CD8-positive, alpha-beta T cell (primary cell): ENCODE measurements at regions of chr10 and their contacts with region 1.

Region 1: DNA sequence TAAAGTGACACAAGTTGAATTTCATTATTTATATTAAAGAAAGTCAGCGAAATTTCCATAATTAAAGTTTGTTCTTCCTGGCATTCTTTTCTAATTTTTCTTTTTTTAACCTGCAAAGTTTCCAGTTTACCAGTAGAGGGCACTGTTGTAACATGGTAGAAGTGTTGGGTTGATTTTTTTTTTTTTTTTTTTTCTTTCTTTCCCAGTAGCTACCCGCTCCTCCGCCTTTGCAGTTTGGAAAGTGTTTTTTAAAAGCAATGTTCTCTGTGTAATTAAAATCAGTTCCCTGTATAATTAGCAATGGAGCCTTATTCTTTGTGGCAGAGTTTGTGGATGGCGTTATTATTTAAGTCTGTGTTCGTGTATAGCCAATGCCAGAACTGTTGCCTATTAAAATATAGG is 53.7 kb downstream of the TAF3 start:
- DNase-seq: peak in 2 of 9 experiments; percentile 40 to 54
- ATAC-seq: no peak
- H3K4me3 ChIP-seq: no peak overlapping the region
- H3K4me3 Mint-ChIP-seq: peak overlapping the region; percentile 56
- H3K27ac ChIP-seq: no peak overlapping the region
- H3K27ac Mint-ChIP-seq: no peak overlapping the region
- H3K4me1 ChIP-seq: no peaks in the 10 kb centered on the region
- H3K4me1 Mint-ChIP-seq: peaks cover 26% of the 10 kb centered on the region
- H3K27me3 ChIP-seq: no peaks in the 10 kb centered on the region
- H3K27me3 Mint-ChIP-seq: no peaks in the 10 kb centered on the region
- CTCF ChIP-seq: peak; percentile 98

Region 2: DNA sequence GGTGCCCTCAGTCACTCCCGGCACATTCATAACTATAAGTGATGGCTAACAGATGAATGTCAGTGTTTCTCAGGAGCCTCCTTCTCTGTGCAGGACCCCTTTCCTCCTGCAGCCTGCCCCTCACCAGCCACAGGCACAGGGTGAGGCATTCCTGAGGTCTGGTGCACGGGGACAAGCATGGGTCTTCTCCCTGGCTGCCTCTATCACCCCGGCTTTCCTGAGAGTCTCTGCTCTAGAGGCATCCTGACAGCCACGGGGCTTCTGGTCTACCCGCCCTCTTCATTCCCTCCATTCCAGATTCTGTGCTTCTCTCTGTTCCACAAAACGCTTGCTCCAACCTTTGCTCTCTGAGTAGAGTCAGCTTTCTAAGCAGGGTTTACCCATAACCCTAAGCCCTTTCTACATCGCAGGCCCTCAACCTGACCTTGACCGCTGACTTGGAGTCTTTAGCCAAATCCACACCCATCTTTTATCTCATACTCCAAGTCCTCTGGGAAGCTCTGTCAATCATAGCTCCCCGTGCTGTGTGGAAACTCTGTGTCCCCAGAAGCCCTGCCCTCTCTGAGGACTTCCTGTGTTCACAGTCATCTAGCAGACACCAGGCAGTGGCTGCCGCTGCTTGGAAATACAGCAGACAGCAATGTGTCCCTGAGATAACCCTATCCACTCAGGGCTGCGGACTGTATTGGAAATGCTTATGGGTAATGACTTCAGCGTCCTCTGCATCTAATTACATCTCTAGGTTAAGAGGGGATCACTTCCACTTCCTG is 620.2 kb before region 1 on chr10:
- CTCF ChIA-PET with region 1: no interaction called
- POLR2A ChIA-PET with region 1: no interaction called
- intact Hi-C with region 1: no loop called
- DNase-seq: peak in 1 of 9 experiments; percentile 21
- ATAC-seq: no peak
- H3K4me3 ChIP-seq: no peak overlapping the region
- H3K4me3 Mint-ChIP-seq: no peak overlapping the region
- H3K27ac ChIP-seq: no peak overlapping the region
- H3K27ac Mint-ChIP-seq: peak overlapping the region; percentile 16
- H3K4me1 ChIP-seq: peaks cover 11% of the 10 kb centered on the region
- H3K4me1 Mint-ChIP-seq: peaks cover 39% of the 10 kb centered on the region
- H3K27me3 ChIP-seq: no peaks in the 10 kb centered on the region
- H3K27me3 Mint-ChIP-seq: no peaks in the 10 kb centered on the region
- CTCF ChIP-seq: no peak

Region 3: DNA sequence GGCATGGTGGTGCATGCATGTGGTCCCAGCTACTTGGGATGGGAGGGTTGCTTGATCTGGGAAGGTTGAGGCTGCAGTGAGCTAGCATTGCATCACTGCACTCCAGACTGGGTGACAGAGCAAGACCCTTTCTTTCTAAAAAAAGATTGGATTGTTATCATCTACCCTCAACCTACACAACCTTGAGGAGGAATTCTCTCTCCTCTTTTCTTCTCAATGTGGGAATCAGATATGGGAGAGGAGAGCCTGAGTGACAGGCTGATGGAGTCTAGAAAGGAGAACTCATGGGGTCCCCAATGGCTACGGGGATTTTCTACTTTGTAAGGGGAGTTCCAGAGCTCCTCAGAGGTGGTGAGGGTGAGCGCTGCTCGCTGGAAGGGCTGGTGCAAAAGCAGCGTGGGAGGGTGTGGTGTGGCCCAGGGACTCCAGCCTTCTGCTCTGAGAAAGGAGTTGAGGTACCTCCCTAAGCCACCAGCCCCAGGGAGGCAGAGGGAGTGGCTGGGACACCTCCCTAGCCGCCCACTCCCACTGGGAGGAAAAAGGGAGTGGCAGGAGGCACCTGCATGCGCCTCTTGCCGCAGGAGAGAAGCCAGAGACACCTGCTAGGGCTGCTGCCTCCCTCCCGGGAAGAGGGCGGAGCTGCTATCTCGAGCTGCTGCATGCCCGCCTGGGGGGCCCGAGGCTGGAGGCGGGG is 230.8 kb after region 1 on chr10:
- CTCF ChIA-PET with region 1: no interaction called
- POLR2A ChIA-PET with region 1: no interaction called
- intact Hi-C with region 1: no loop called
- DNase-seq: peak in 3 of 9 experiments; percentile 20 to 43 (median 23)
- ATAC-seq: no peak
- H3K4me3 ChIP-seq: no peak overlapping the region
- H3K4me3 Mint-ChIP-seq: no peak overlapping the region
- H3K27ac ChIP-seq: no peak overlapping the region
- H3K27ac Mint-ChIP-seq: no peak overlapping the region
- H3K4me1 ChIP-seq: no peaks in the 10 kb centered on the region
- H3K4me1 Mint-ChIP-seq: peaks cover 3% of the 10 kb centered on the region
- H3K27me3 ChIP-seq: no peaks in the 10 kb centered on the region
- H3K27me3 Mint-ChIP-seq: no peaks in the 10 kb centered on the region
- CTCF ChIP-seq: no peak

Region 4: DNA sequence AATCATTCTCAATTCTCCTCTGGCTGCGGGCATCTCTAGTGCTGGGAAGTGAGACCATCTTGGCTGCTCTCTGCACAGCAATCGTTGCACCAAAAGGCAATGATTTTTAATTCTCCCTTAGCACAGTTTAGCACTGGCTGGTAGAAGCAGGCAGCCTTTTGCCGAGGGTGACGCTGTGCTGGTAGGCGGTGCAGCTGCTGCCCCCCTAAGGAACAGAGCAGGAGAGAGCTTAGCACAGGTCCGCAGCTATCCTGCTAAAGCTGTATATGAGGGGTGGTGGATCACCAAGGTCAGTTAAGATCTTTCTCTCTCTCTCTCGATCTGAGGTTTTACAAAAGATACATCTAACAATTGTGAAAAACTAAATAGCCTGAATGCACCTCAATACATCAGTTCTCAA is 572.6 kb after region 1 on chr10:
- CTCF ChIA-PET with region 1: no interaction called
- POLR2A ChIA-PET with region 1: no interaction called
- intact Hi-C with region 1: loop called (anchors 1 to 5 kb)
- DNase-seq: peak; percentile 9 to 82 (median 65)
- ATAC-seq: peak; percentile 100
- H3K4me3 ChIP-seq: no peak overlapping the region
- H3K4me3 Mint-ChIP-seq: no peak overlapping the region
- H3K27ac ChIP-seq: no peak overlapping the region
- H3K27ac Mint-ChIP-seq: no peak overlapping the region
- H3K4me1 ChIP-seq: peaks cover 6% of the 10 kb centered on the region
- H3K4me1 Mint-ChIP-seq: peaks cover 10% of the 10 kb centered on the region
- H3K27me3 ChIP-seq: no peaks in the 10 kb centered on the region
- H3K27me3 Mint-ChIP-seq: peaks cover 4% of the 10 kb centered on the region
- CTCF ChIP-seq: no peak

Region 5: DNA sequence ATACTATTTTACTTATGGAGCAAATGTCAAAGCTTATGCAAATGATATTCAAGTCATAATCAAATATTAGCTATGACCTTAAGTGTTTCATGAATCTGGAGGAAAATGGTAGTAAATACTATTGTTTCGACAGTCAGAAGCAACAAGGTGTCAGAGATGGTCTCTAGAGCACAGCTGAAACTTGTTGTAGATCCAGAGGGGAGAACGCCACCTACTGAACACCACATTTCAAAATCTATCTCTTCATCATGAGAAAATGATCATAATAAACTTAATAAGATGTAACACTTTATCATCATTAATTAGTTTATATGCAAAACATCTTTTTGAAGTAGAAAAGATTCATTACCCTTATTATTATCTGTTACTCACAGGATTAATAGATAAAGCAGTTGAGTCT is 601.2 kb after region 1 on chr10:
- CTCF ChIA-PET with region 1: no interaction called
- POLR2A ChIA-PET with region 1: no interaction called
- intact Hi-C with region 1: loop called (anchors 1 to 5 kb)
- DNase-seq: peak in 3 of 9 experiments; percentile 15 to 69 (median 58)
- ATAC-seq: peak; percentile 34
- H3K4me3 ChIP-seq: no peak overlapping the region
- H3K4me3 Mint-ChIP-seq: no peak overlapping the region
- H3K27ac ChIP-seq: no peak overlapping the region
- H3K27ac Mint-ChIP-seq: no peak overlapping the region
- H3K4me1 ChIP-seq: no peaks in the 10 kb centered on the region
- H3K4me1 Mint-ChIP-seq: no peaks in the 10 kb centered on the region
- H3K27me3 ChIP-seq: no peaks in the 10 kb centered on the region
- H3K27me3 Mint-ChIP-seq: peaks cover 16% of the 10 kb centered on the region
- CTCF ChIP-seq: peak; percentile 16

Region 6: GRCh38 chr10:9075422-9075821 is 1203.4 kb after region 1 on chr10:
- CTCF ChIA-PET with region 1: no interaction called
- POLR2A ChIA-PET with region 1: no interaction called
- intact Hi-C with region 1: loop called in 1 of 2 experiments (anchors 5 kb)
- DNase-seq: no peak
- ATAC-seq: no peak
- H3K4me3 ChIP-seq: no peak overlapping the region
- H3K4me3 Mint-ChIP-seq: no peak overlapping the region
- H3K27ac ChIP-seq: no peak overlapping the region
- H3K27ac Mint-ChIP-seq: no peak overlapping the region
- H3K4me1 ChIP-seq: no peaks in the 10 kb centered on the region
- H3K4me1 Mint-ChIP-seq: no peaks in the 10 kb centered on the region
- H3K27me3 ChIP-seq: no peaks in the 10 kb centered on the region
- H3K27me3 Mint-ChIP-seq: peaks cover 2% of the 10 kb centered on the region
- CTCF ChIP-seq: no peak

Region 7: DNA sequence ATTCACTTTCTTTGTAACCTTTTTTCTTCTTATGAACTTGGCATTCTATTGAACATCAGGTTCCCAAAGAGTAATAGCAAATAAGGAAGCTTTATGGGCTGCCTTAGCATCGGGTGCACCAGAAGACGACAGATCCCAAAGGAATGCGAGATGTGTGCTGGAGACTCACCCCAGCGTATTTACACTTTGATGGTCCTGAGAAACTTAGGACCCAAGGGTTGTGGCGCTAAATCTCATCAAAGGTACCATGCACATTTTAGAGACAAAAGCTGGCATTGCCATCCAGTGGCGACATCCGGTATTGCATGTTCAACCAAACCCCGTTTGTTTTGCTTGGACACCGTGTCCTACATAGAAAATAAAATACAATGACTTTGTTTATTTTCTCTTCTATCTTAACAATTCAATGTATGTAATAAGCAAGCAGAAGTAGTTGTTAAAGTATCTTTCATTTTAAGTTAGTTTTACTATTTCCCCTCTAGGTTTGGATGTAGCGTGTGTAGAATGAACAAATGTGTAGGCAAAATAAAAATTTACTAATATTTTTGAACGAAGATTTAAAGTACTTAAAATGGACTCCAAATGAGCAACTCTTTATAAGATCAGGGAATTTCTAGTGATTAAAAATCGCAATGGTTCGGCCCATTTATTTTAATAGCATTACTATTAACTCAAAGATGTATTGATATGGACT is 1337.2 kb after region 1 on chr10:
- CTCF ChIA-PET with region 1: interaction called, 11 read pairs
- POLR2A ChIA-PET with region 1: no interaction called
- intact Hi-C with region 1: loop called (anchors 1 kb)
- DNase-seq: peak; percentile 51 to 84 (median 69)
- ATAC-seq: peak; percentile 64
- H3K4me3 ChIP-seq: no peak overlapping the region
- H3K4me3 Mint-ChIP-seq: no peak overlapping the region
- H3K27ac ChIP-seq: no peak overlapping the region
- H3K27ac Mint-ChIP-seq: no peak overlapping the region
- H3K4me1 ChIP-seq: peaks cover 6% of the 10 kb centered on the region
- H3K4me1 Mint-ChIP-seq: peaks cover 5% of the 10 kb centered on the region
- H3K27me3 ChIP-seq: no peaks in the 10 kb centered on the region
- H3K27me3 Mint-ChIP-seq: peaks cover 6% of the 10 kb centered on the region
- CTCF ChIP-seq: peak; percentile 96

Region 8: GRCh38 chr10:9302120-9302746 is 1430.2 kb after region 1 on chr10:
- CTCF ChIA-PET with region 1: interaction called, 4 read pairs
- POLR2A ChIA-PET with region 1: no interaction called
- intact Hi-C with region 1: loop called (anchors 1 kb)
- DNase-seq: peak in 3 of 9 experiments; percentile 19 to 63 (median 51)
- ATAC-seq: peak; percentile 44
- H3K4me3 ChIP-seq: no peak overlapping the region
- H3K4me3 Mint-ChIP-seq: no peak overlapping the region
- H3K27ac ChIP-seq: no peak overlapping the region
- H3K27ac Mint-ChIP-seq: no peak overlapping the region
- H3K4me1 ChIP-seq: no peaks in the 10 kb centered on the region
- H3K4me1 Mint-ChIP-seq: no peaks in the 10 kb centered on the region
- H3K27me3 ChIP-seq: no peaks in the 10 kb centered on the region
- H3K27me3 Mint-ChIP-seq: peaks cover 11% of the 10 kb centered on the region
- CTCF ChIP-seq: peak; percentile 59